Ascending aorta (tissue), 2 donors: ENCODE measurements at regions of chr15 and their contacts with region 1.

Region 1: DNA sequence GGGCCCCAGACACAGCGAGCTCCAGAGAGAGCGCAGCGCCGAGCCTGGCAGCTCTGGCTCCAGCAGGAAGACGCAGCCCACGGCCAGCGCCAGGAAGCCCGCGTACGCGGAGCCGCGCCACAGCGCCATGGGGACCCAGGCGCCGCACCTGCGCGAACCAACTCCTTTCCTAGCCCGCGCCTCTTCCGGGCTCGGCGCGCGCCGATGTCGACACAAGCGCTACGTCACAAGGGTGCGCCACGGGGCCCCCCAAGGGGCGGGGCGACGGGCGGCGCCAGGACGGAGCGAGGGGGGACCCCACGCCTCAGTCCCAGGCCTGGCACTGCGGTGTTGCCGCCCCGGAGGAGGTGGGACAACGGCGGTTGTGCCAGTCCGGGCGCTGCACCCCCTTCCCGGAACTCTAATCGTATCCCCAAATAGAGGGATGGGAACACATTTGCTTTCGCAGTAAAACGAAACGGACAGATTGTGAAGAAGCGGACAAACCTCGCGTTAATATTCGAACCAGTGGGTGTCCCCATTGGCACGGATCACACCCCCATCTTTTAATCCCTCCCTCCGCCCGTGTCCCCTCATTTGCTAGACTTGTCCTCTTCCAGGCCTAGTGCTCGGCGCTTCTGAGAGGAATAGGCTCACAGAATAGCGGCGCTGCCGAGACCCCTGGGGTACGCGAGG is at the start of gene ADPGK:
- DNase-seq: peak; percentile 73 to 94
- H3K4me3 ChIP-seq: peak within 1 kb of the TSS; percentile 76 to 80
- H3K27ac ChIP-seq: peak within 1 kb of the TSS; percentile 94 to 96
- H3K4me1 ChIP-seq: peaks cover 2 to 23% of the 10 kb centered on the region in 2 donors
- H3K27me3 ChIP-seq: no peaks in the 10 kb centered on the region
- CTCF ChIP-seq: peak in 1 of 3 experiments; percentile 1
- total RNA-seq, gene ADPGK: 24.8 TPM

Region 2: GRCh38 chr15:72685925-72686794 is 97.5 kb before region 1 on chr15 and contains the starts of genes BBS4 and HIGD2B:
- intact Hi-C with region 1: loop called (anchors 2 kb)
- DNase-seq: peak; percentile 53 to 94
- H3K4me3 ChIP-seq: peak within 1 kb of the TSS; percentile 59 to 77
- H3K27ac ChIP-seq: peak within 1 kb of the TSS; percentile 88 to 92
- H3K4me1 ChIP-seq: peaks cover 0 to 8% of the 10 kb centered on the region in 2 donors
- H3K27me3 ChIP-seq: no peaks in the 10 kb centered on the region
- CTCF ChIP-seq: no peak
- total RNA-seq, gene BBS4: 9.9 TPM
- total RNA-seq, gene HIGD2B: not detected

Region 3: DNA sequence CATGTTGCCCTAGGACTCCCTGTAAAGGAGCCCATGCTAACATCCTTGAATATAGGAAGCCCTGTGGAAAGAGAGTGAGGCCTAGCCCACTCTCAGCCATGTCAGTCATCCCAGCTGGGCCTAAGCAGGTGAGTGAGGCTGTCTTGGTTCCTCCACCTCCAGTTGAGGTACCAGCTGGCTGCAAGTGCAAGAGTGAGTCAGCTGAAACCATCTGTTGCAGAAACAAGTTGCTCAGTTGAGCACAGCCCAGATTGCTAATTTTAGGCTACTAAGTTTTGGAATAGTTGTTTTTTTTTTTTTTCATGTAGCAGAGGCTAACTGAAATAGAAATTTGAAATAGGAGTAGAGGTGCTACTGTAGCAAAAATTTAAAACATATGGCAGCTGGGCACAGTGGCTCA is 43.5 kb after region 1 on chr15:
- intact Hi-C with region 1: no loop called
- DNase-seq: no peak
- H3K4me3 ChIP-seq: no peak overlapping the region
- H3K27ac ChIP-seq: peak overlapping the region in 1 of 2 donors; percentile 40
- H3K4me1 ChIP-seq: peaks cover 0 to 2% of the 10 kb centered on the region in 2 donors
- H3K27me3 ChIP-seq: no peaks in the 10 kb centered on the region
- CTCF ChIP-seq: no peak

Region 4: DNA sequence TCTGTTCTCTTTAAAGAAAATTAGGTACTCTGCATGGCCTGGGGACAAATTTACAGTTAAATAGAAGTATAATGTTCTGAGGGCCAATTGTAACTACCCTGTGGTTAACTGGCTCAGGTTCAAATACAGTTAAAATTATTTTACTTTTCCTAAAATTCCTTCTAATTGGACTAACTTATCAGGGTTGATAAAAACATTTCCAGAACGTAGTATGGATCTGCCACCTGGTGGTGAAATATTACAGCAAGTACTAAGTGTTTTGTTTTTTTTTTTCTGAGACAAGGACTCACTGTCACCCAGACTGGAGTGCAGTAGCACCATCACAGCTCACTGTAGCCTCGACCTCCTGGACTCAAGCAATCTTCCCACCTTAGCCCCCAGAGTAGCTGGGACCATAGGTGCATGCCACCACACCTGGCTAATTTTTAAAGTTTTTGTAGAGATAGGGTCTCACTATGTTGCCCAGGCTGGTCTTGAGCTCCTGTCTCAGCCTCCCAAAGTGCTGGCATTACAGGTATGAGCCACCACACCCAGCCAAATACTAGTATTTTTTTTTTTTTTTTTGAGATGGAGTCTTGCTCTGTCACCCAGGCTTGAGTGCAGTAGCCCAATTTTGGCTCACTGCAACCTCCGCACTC is 297.7 kb after region 1 on chr15:
- intact Hi-C with region 1: loop called (anchors 1 kb)
- DNase-seq: no peak
- H3K4me3 ChIP-seq: no peak overlapping the region
- H3K27ac ChIP-seq: no peak overlapping the region
- H3K4me1 ChIP-seq: peaks cover 0 to 26% of the 10 kb centered on the region in 2 donors
- H3K27me3 ChIP-seq: no peaks in the 10 kb centered on the region
- CTCF ChIP-seq: peak; percentile 38 to 81 (median 56)

Region 5: DNA sequence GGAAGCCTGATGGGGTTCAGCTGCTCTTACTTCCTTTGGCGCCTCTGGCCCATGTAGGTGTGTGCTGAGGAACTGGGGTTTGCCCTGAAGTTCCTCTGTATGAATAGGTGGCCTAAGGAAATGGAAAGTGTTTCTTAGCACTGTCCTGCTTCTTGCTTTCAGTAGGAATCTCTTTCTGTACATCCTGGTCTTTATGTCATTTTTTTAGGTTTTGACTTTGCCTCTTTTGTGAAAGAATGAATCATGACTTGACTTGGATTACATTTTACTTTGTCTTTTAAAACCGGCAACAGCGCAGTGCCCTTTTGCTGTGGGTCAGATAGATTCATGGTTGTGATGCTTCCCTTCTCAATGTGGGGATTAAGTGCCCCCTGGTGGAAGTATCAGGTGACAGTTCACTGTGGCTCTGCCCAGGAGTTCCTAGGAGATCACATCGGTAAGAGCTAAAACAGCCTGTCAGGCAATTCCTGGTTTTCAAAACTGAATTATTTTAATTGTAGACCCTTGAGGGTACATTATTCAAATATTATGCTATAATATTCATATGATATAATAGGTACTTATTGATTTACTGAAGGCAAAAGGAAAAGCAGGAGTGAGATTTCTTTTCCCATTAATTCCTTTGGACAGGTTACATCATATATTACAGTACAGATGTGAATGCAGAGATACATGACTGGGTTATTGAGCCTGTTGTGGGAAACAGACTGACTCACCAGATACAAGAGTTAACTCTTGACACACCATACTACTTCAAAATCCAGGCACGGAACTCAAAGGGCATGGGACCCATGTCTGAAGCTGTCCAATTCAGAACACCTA is 489.7 kb after region 1 on chr15:
- intact Hi-C with region 1: loop called (anchors 5 kb)
- DNase-seq: peak in 1 of 2 donors; percentile 71
- H3K4me3 ChIP-seq: no peak overlapping the region
- H3K27ac ChIP-seq: no peak overlapping the region
- H3K4me1 ChIP-seq: peaks cover 0 to 3% of the 10 kb centered on the region in 2 donors
- H3K27me3 ChIP-seq: no peaks in the 10 kb centered on the region
- CTCF ChIP-seq: peak; percentile 45 to 80 (median 72)